Activated B cell treated with CpG ODN at 0.5 μM for 24 hours (primary cell): ENCODE measurements at regions of chr9 and their contacts with region 1.

Region 1: DNA sequence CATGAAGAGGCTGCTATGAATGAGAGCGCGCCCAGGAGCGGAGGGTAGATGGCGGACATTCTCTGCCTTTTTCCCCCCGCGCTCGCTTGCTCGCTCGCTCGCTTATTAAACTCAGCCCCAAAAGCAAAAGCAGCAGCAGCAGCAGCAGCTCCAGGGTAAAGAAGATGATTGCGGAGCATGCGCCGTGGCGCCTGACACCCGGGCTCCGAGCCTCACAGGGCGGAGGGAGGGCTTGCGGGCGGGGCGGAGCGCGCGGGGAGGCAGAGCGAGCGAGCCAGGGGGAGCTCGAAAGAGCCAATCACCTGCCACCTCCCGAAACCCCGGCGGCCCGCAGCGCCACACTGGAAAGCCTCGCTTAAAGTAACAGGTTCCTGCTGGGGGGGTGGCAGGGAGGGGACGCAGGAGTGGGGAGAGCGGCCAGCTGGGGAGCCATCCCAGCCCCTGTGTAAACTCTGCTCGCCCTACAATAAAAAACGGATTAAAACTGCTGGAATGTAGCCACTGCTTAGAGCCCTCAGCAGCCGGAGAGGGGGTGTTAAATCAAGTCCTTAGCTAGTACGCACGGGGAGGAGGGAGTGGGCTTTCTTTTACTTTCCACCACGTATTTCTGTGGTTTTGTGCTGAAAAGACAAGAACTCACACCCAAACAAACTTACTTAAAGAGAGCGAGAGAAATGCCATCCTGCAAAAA is at the start of gene MLLT3:
- DNase-seq: peak; percentile 87
- ATAC-seq: peak; percentile 88
- H3K4me3 Mint-ChIP-seq: peak within 1 kb of the TSS; percentile 92
- H3K27ac Mint-ChIP-seq: peak within 1 kb of the TSS; percentile 80
- H3K4me1 Mint-ChIP-seq: peaks cover 37% of the 10 kb centered on the region
- H3K27me3 Mint-ChIP-seq: peaks cover 17% of the 10 kb centered on the region
- CTCF ChIP-seq: no peak
- total RNA-seq, gene MLLT3: 1.4 and 1.5 TPM in 2 replicates

Region 2: DNA sequence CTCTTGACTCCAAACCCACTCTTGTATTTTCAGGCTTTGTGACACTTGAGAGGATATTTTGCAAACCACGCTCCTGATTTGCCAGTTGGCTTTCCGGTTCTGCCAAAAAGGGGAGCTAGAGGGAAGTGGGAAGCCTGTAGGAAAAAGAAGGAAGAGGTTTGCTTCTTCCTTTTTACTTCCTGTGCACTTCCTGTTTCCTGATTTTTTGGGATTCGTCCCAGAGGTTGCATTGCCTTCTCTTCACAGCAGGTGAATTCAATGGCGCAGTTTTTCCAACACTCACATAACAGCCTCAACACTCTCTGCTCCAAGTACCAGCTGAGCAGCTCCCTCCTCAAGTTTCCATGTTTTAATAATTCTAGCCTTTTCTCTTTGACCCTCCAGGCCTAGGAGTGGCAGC is 881.3 kb before region 1 on chr9:
- CTCF ChIA-PET with region 1: no interaction called
- POLR2A ChIA-PET with region 1: no interaction called
- intact Hi-C with region 1: no loop called
- DNase-seq: no peak
- ATAC-seq: no peak
- H3K4me3 Mint-ChIP-seq: no peak overlapping the region
- H3K27ac Mint-ChIP-seq: no peak overlapping the region
- H3K4me1 Mint-ChIP-seq: no peaks in the 10 kb centered on the region
- H3K27me3 Mint-ChIP-seq: no peaks in the 10 kb centered on the region
- CTCF ChIP-seq: no peak

Region 3: DNA sequence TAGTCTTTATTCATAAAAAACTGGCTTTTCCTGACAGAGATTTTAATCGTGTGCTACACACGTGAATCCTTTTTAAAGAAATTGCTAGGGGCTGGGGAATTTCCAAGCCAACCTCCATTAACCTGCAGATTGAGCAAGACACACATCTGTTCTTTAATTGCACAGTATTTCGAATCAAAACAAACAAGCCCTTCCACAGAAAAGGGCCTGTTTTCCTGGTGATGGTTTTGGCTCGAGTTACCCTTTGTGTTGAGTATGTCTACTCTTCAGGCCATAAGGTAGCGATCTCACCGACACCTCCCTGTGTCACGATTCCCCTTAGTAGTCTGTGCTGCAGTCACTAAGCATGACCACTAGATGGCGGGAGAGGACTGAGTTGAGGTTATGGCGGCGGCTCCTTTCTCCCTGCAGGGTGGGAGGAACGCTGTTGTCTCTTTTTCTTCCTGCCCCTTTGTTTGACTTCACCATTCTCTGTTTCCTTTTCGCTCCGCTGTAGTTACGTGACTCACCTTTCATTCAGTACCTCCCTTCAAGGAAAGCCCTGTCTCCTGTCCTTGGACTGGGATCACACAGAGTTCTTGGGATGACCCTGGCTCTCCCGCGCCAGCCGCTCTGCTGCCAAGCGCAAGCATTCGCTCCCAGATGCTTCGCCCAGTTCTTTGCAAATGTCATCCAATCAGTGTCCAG is 696.5 kb before region 1 on chr9:
- CTCF ChIA-PET with region 1: interaction called, 3 read pairs
- POLR2A ChIA-PET with region 1: no interaction called
- intact Hi-C with region 1: loop called (anchors 1 kb)
- DNase-seq: peak; percentile 37
- ATAC-seq: peak; percentile 99
- H3K4me3 Mint-ChIP-seq: peak overlapping the region; percentile 49
- H3K27ac Mint-ChIP-seq: no peak overlapping the region
- H3K4me1 Mint-ChIP-seq: peaks cover 11% of the 10 kb centered on the region
- H3K27me3 Mint-ChIP-seq: peaks cover 19% of the 10 kb centered on the region
- CTCF ChIP-seq: no peak

Region 4: GRCh38 chr9:20532584-20532983 is 89.9 kb before region 1 on chr9:
- CTCF ChIA-PET with region 1: no interaction called
- POLR2A ChIA-PET with region 1: no interaction called
- intact Hi-C with region 1: no loop called
- DNase-seq: no peak
- ATAC-seq: no peak
- H3K4me3 Mint-ChIP-seq: no peak overlapping the region
- H3K27ac Mint-ChIP-seq: no peak overlapping the region
- H3K4me1 Mint-ChIP-seq: no peaks in the 10 kb centered on the region
- H3K27me3 Mint-ChIP-seq: no peaks in the 10 kb centered on the region
- CTCF ChIP-seq: no peak

Region 5: GRCh38 chr9:20604562-20604961 is 17.9 kb before region 1 on chr9:
- CTCF ChIA-PET with region 1: interaction called, 5 read pairs
- POLR2A ChIA-PET with region 1: interaction called, 3 read pairs
- intact Hi-C with region 1: loop called (anchors 2 kb)
- DNase-seq: no peak
- ATAC-seq: no peak
- H3K4me3 Mint-ChIP-seq: no peak overlapping the region
- H3K27ac Mint-ChIP-seq: no peak overlapping the region
- H3K4me1 Mint-ChIP-seq: peaks cover 11% of the 10 kb centered on the region
- H3K27me3 Mint-ChIP-seq: peaks cover 14% of the 10 kb centered on the region
- CTCF ChIP-seq: no peak

Region 6: GRCh38 chr9:20684035-20684872 is 61.8 kb after region 1 on chr9 and contains the start of gene FOCAD:
- CTCF ChIA-PET with region 1: interaction called, 6 read pairs
- POLR2A ChIA-PET with region 1: interaction called, 22 read pairs
- intact Hi-C with region 1: loop called (anchors 1 kb)
- DNase-seq: peak; percentile 95
- ATAC-seq: peak; percentile 99
- H3K4me3 Mint-ChIP-seq: peak within 1 kb of the TSS; percentile 91
- H3K27ac Mint-ChIP-seq: peak within 1 kb of the TSS; percentile 66
- H3K4me1 Mint-ChIP-seq: peaks cover 15% of the 10 kb centered on the region
- H3K27me3 Mint-ChIP-seq: no peaks in the 10 kb centered on the region
- CTCF ChIP-seq: no peak
- total RNA-seq, gene FOCAD: 11.7 and 11.9 TPM in 2 replicates

Region 7: GRCh38 chr9:21096172-21096900 is 473.9 kb after region 1 on chr9:
- CTCF ChIA-PET with region 1: no interaction called
- POLR2A ChIA-PET with region 1: interaction called, 3 read pairs
- intact Hi-C with region 1: loop called (anchors 5 kb)
- DNase-seq: no peak
- ATAC-seq: peak; percentile 78
- H3K4me3 Mint-ChIP-seq: peak overlapping the region; percentile 61
- H3K27ac Mint-ChIP-seq: peak overlapping the region; percentile 42
- H3K4me1 Mint-ChIP-seq: peaks cover 33% of the 10 kb centered on the region
- H3K27me3 Mint-ChIP-seq: no peaks in the 10 kb centered on the region
- CTCF ChIP-seq: no peak

Region 8: DNA sequence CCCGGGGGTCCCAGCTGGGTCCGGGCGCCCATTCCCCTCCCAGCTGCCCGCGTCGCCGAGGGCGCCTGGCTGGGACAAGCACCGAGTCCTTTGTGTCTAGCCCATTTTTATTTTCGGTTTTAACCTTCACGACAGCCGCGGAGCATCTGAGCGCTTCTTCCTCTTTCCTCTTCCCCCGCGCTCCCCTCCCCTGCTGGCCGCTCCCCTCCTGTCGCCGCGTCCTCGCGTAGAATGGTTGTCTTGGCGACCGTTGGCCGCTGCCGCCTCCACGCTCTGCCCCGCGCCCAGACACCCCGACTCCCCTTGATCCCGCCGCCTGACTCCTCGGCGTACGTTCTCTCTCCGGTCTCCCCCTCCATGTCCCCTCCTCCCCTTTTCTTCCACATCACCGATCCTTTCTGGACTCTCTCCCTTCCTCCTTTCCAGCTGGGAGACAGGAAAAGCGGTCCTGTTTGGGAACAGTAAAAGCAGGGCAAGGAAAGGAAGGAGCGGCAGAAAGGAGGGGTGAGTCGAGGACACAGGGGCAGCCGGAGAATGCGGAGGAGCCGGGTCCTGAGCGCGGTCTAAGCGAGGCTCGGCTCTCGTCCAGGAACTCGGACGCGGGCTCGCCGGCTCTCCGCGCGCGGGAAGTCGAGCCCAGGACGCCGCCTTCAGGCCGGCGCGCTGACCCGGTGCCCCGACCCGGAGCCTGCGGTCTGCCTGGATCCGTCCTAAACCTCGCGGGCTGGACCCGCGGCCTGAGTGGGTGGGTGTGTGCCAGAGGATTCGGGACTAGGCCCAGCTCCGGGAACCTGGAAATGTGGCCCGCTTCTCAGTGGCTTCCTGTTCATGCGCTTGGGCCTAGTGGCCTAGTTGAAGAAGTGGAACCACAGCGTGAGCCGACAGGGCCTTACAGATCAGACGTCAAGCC is 1373.0 kb after region 1 on chr9:
- CTCF ChIA-PET with region 1: no interaction called
- POLR2A ChIA-PET with region 1: no interaction called
- intact Hi-C with region 1: loop called (anchors 5 kb)
- DNase-seq: peak; percentile 82
- ATAC-seq: peak; percentile 84
- H3K4me3 Mint-ChIP-seq: peak overlapping the region; percentile 98
- H3K27ac Mint-ChIP-seq: peak overlapping the region; percentile 97
- H3K4me1 Mint-ChIP-seq: peaks cover 24% of the 10 kb centered on the region
- H3K27me3 Mint-ChIP-seq: no peaks in the 10 kb centered on the region
- CTCF ChIP-seq: no peak